Activated T-helper 1 cell treated with anti-CD3 and anti-CD28 coated beads, Interleukin-12 subunit alpha, Interleukin-12 subunit beta, Interleukin-2, Interleukin-4 antibody, amounts not matched to agents 30 ng/mL and 10 ng/mL and 1 ng/mL, durations not matched to agents 14 hours and 24 hours and 36 hours (primary cell): ENCODE measurements at regions of chr1 and their contacts with region 1.

Region 1: DNA sequence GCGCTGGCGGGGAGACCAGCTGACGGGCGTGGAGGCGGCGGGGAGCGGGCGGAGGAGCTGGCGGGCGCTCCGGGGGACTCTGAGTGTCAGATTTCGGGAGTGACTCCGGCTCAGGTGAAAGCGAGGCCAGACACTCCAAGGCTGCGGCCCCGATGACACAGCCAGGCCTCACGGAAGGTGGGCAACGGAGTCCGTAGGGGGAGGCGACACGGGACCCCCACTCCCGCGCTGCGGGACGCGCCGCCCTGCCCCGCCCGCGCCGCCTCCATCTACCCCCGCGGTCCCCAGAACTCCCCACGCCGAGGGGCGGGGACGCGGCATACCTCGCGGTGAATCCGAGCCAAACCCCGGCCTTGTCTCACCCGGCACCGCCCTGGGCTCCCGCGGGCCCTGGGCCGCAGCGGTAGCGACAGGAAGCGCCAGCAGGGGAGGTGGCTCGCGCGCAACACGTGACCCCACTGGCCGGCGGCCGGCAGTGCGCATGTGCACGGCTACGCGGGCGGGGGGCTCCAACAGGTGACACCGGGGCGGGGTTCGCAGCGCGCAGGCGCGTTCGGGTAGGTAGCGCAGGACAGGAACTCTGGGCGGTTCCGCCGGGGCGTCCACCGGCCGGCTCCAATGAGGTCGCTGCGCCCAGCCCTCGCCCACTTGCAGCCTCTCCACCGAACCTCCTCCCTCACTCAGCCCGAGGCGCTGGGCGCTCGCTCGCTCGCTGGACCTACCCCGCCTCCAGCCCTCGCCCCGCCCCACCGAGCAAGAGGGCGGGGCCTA is at the start of gene CC2D1B:
- DNase-seq: peak; percentile 100
- H3K4me3 Mint-ChIP-seq: peak within 1 kb of the TSS; percentile 90
- H3K27ac Mint-ChIP-seq: peak within 1 kb of the TSS; percentile 84
- H3K4me1 Mint-ChIP-seq: peaks cover 55% of the 10 kb centered on the region
- H3K27me3 Mint-ChIP-seq: no peaks in the 10 kb centered on the region
- total RNA-seq, gene CC2D1B: 40.5 and 42.3 TPM in 2 replicates

Region 2: GRCh38 chr1:51616901-51617708 is 748.8 kb before region 1 on chr1 and contains the start of gene OSBPL9:
- intact Hi-C with region 1: loop called (anchors 10 kb)
- DNase-seq: peak; percentile 79
- H3K4me3 Mint-ChIP-seq: peak within 1 kb of the TSS; percentile 100
- H3K27ac Mint-ChIP-seq: peak within 1 kb of the TSS; percentile 98
- H3K4me1 Mint-ChIP-seq: peaks cover 22% of the 10 kb centered on the region
- H3K27me3 Mint-ChIP-seq: peaks cover 5% of the 10 kb centered on the region
- total RNA-seq, gene OSBPL9: 48.1 and 48.8 TPM in 2 replicates

Region 3: GRCh38 chr1:52056163-52056936 is 309.6 kb before region 1 on chr1 and contains the start of gene BTF3L4:
- intact Hi-C with region 1: loop called (anchors 1 kb)
- DNase-seq: peak; percentile 92
- H3K4me3 Mint-ChIP-seq: peak within 1 kb of the TSS; percentile 100
- H3K27ac Mint-ChIP-seq: peak within 1 kb of the TSS; percentile 100
- H3K4me1 Mint-ChIP-seq: peaks cover 72% of the 10 kb centered on the region
- H3K27me3 Mint-ChIP-seq: no peaks in the 10 kb centered on the region
- total RNA-seq, gene BTF3L4: 44.9 and 47.5 TPM in 2 replicates

Region 4: DNA sequence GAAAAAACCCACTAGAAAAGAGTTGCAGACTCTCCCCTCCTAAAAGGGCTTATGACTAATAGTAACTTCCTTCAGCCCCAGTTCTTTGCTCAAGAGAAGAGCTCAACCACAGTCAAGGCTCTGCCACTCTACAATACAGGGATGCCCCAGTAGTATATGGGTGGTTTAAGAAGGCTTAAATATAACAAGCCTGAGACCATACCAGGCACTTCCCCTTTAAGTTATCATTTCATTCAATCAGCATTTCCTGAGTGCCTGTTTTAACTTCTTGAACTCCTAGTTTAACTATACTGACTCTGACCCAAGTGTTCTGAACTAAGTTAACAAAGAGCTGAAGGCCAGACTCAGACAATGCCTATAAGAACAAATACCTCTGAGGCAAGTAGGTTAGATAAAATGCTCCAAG is 58.3 kb after region 1 on chr1:
- intact Hi-C with region 1: loop called (anchors 5 kb)
- DNase-seq: peak; percentile 21
- H3K4me3 Mint-ChIP-seq: peak overlapping the region; percentile 19
- H3K27ac Mint-ChIP-seq: peak overlapping the region; percentile 82
- H3K4me1 Mint-ChIP-seq: peaks cover 49% of the 10 kb centered on the region
- H3K27me3 Mint-ChIP-seq: no peaks in the 10 kb centered on the region

Region 5: DNA sequence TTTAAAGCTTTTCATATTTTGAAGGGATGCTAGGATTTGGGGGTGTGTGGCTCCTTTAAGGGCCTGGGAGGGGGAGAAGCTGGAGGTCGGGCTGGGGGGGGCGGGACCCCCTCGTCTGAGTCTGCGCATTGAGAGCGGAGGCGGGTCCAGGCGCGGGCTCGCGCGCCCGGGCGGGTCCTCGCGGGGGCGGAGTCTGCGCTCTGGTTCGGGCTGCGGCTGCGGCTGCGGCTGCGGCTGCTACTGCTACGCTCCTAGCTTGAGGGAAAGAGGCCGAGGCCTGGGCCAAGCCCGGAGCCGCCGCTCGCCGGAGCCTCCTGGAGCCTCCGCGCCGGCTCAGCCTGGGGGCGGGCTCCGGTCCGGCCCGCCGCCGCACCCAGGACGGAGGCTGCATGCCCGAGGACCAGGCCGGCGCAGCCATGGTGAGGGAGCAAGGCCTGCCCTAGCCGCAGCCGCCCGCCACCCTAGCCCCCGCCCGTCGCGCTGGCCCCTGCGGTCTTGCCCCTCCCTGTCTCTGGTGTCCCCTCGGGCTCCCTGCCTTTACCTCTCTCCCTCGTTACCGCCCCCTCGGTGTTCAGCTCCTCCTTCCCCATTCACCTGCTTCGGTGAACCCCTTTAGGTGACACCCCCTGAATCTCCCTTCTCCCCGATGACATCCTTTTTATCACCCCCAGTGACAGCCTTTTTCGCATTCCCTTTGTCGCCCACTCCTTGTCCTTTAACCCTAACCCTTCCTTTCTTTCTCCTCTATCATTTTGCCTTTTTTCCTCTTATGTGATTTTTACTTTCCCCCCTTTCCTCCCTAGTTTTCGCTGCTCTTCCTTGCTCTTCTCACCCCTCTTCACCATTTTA is 360.6 kb after region 1 on chr1 and contains the start of gene ZYG11B:
- intact Hi-C with region 1: loop called (anchors 1 kb)
- DNase-seq: peak; percentile 88
- H3K4me3 Mint-ChIP-seq: peak within 1 kb of the TSS; percentile 88
- H3K27ac Mint-ChIP-seq: peak within 1 kb of the TSS; percentile 82
- H3K4me1 Mint-ChIP-seq: peaks cover 42% of the 10 kb centered on the region
- H3K27me3 Mint-ChIP-seq: no peaks in the 10 kb centered on the region
- total RNA-seq, gene ZYG11B: 8.4 and 8.5 TPM in 2 replicates

Region 6: DNA sequence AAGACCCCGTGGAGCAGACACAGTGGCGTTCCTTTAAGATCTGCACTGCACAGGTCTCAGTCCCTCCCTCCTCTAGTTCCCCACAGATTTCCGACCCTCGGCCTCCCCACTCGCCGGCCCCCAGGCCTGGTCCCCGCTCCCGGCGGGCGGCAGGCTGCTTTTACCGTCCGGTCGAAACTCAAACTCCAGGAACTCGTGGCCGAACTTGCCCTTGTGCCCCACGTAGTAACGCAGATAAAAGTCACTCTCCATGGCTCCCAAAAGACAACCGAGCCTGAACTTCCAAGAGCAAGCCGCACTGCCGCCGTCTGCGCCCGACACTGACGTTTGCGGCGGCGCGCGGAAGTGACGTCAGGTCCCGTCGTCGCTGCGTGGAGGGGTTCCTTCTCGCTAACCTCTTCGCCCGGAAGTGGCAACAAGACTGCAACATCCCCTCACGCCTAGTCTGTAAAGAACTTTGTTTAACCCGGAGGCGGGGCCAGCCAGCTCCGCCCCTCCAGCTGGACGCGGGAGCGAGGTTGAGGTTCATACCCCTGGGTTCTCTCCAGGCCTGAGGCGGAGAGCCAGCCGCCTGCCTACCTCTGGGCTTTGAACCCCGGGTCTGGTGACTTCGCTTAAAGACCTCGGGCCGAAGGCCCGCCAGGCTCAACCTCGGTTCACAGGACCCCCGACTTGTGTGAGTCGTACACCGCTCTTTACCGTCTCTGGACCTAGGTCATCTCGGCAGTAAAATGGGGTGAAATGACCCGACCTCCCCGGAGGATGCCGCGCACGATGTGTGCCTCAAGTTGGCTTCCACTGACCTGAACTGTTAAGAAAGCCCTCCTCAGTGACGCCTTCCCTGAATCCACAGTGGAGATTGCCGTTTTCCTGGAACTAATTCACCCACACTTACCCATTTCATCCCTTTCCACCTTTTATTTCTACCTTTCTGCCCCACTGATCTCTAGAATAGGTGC is 872.5 kb after region 1 on chr1 and contains the start of gene MAGOH:
- intact Hi-C with region 1: loop called (anchors 1 kb)
- DNase-seq: peak; percentile 93
- H3K4me3 Mint-ChIP-seq: peak within 1 kb of the TSS; percentile 97
- H3K27ac Mint-ChIP-seq: peak within 1 kb of the TSS; percentile 98
- H3K4me1 Mint-ChIP-seq: peaks cover 28% of the 10 kb centered on the region
- H3K27me3 Mint-ChIP-seq: no peaks in the 10 kb centered on the region
- total RNA-seq, gene MAGOH: 104 TPM in 2 replicates